GM12878 (cell line): ENCODE measurements at regions of chr3 and their contacts with region 1.

Region 1: DNA sequence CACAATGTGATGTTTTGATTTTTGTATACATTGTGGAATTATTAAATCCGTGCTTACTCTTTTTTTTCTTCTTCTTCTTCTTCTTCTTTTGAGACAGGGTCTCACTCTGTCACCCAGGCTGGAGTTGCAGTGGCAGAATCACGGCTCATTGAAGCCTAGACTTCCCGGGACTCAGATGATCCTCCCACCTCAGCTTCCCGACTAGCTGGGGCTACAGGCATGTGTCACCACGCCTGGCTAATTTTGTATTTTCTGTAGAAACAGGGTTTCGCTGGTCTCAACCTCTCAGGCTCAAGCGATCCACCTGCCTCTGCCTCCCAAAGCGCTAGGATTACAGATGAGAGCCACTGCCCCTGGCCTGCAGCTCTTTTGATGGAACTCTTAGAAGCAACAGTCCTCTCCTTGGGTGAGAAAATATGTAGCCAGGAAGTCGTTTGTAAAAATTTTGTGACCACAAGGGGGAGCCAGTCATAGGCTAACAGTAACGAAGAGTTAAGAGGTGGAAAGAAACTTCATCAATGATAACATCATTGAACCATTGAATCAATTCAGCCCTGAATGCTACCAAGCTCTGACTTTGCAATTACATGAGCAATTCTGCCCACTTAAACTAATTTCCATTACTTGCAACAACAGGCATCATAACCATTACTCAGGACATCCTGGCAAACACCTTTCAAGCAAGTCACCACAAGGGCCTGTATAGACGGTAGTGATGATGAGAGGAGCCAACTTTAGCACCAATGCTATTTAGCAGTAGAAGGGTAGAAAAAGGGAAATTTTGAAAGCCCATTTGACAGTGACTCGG is 16.7 kb upstream of the CMTM7 start:
- DNase-seq: peak; percentile 42
- ATAC-seq: peak; percentile 92
- H3K4me3 ChIP-seq: no peak overlapping the region
- H3K27ac ChIP-seq: no peak overlapping the region
- H3K4me1 ChIP-seq: peaks cover 4% of the 10 kb centered on the region; the same call in 1 of the 2 replicates
- H3K27me3 ChIP-seq: peaks cover 0 to 3% of the 10 kb centered on the region in 2 experiments; a peak in 1 of 4 replicates
- CTCF ChIP-seq: peak; percentile 55 to 60 (median 59); a peak in 5 of 6 replicates
- EP300 ChIP-seq: no peak
- POLR2A ChIP-seq: no peak
- RAD21 ChIP-seq: peak; percentile 75

Region 2: GRCh38 chr3:32401556-32402081 is 26.6 kb after region 1 on chr3:
- CTCF ChIA-PET with region 1: interaction called, 102 read pairs
- POLR2A ChIA-PET with region 1: no interaction called
- RAD21 ChIA-PET with region 1: interaction called, 24 read pairs
- SMC1A ChIA-PET with region 1: interaction called, 78 read pairs
- in situ Hi-C with region 1: no loop called
- intact Hi-C with region 1: loop called (anchors 1 kb)
- DNase-seq: no peak
- ATAC-seq: peak; percentile 83
- H3K4me3 ChIP-seq: peak overlapping the region; percentile 61
- H3K27ac ChIP-seq: no peak overlapping the region
- H3K4me1 ChIP-seq: peaks cover 3% of the 10 kb centered on the region
- H3K27me3 ChIP-seq: peaks cover 0 to 3% of the 10 kb centered on the region in 2 experiments; a peak in 1 of 4 replicates
- CTCF ChIP-seq: no peak
- EP300 ChIP-seq: no peak
- POLR2A ChIP-seq: no peak
- RAD21 ChIP-seq: no peak

Region 3: GRCh38 chr3:32420126-32421038 is 45.4 kb after region 1 on chr3:
- CTCF ChIA-PET with region 1: interaction called, 22 read pairs
- POLR2A ChIA-PET with region 1: no interaction called
- RAD21 ChIA-PET with region 1: interaction called, 14 read pairs
- SMC1A ChIA-PET with region 1: interaction called, 26 read pairs
- in situ Hi-C with region 1: no loop called
- intact Hi-C with region 1: no loop called
- DNase-seq: peak; percentile 56
- ATAC-seq: peak; percentile 91
- H3K4me3 ChIP-seq: no peak overlapping the region
- H3K27ac ChIP-seq: no peak overlapping the region
- H3K4me1 ChIP-seq: peaks cover 35% of the 10 kb centered on the region
- H3K27me3 ChIP-seq: no peaks in the 10 kb centered on the region
- CTCF ChIP-seq: peak in 1 of 3 experiments; percentile 22; a peak in 2 of 6 replicates
- EP300 ChIP-seq: peak; percentile 68 to 89; a peak in 3 of 4 replicates
- POLR2A ChIP-seq: no peak
- RAD21 ChIP-seq: peak; percentile 48

Region 4: GRCh38 chr3:32438596-32439344 is 63.8 kb after region 1 on chr3:
- CTCF ChIA-PET with region 1: interaction called, 5 read pairs
- POLR2A ChIA-PET with region 1: no interaction called
- RAD21 ChIA-PET with region 1: interaction called, 8 read pairs
- SMC1A ChIA-PET with region 1: interaction called, 29 read pairs
- in situ Hi-C with region 1: no loop called
- intact Hi-C with region 1: no loop called
- DNase-seq: peak; percentile 92
- ATAC-seq: peak; percentile 89
- H3K4me3 ChIP-seq: no peak overlapping the region
- H3K27ac ChIP-seq: peak overlapping the region; percentile 38
- H3K4me1 ChIP-seq: peaks cover 56% of the 10 kb centered on the region
- H3K27me3 ChIP-seq: no peaks in the 10 kb centered on the region
- CTCF ChIP-seq: no peak
- EP300 ChIP-seq: peak; percentile 96 to 99
- POLR2A ChIP-seq: no peak
- RAD21 ChIP-seq: no peak

Region 5: GRCh38 chr3:32493437-32494414 is 118.7 kb after region 1 on chr3:
- CTCF ChIA-PET with region 1: interaction called, 20 read pairs
- POLR2A ChIA-PET with region 1: interaction called, 4 read pairs
- RAD21 ChIA-PET with region 1: interaction called, 5 read pairs
- SMC1A ChIA-PET with region 1: interaction called, 11 read pairs
- in situ Hi-C with region 1: no loop called
- intact Hi-C with region 1: no loop called
- DNase-seq: no peak
- ATAC-seq: peak; percentile 77
- H3K4me3 ChIP-seq: 0 out of 2 replicates have a peak overlapping the region, but pooled peaks have one; percentile 13
- H3K27ac ChIP-seq: no peak overlapping the region; the same call in 1 of the 2 replicates
- H3K4me1 ChIP-seq: peaks cover 23% of the 10 kb centered on the region
- H3K27me3 ChIP-seq: no peaks in the 10 kb centered on the region
- CTCF ChIP-seq: no peak
- EP300 ChIP-seq: peak; percentile 74 to 83; a peak in 3 of 4 replicates
- POLR2A ChIP-seq: no peak
- RAD21 ChIP-seq: no peak

Region 6: GRCh38 chr3:32510075-32510724 is 135.2 kb after region 1 on chr3:
- CTCF ChIA-PET with region 1: interaction called, 3 read pairs
- POLR2A ChIA-PET with region 1: no interaction called
- RAD21 ChIA-PET with region 1: no interaction called
- SMC1A ChIA-PET with region 1: interaction called, 10 read pairs
- in situ Hi-C with region 1: no loop called
- intact Hi-C with region 1: no loop called
- DNase-seq: no peak
- ATAC-seq: peak; percentile 97
- H3K4me3 ChIP-seq: no peak overlapping the region
- H3K27ac ChIP-seq: no peak overlapping the region
- H3K4me1 ChIP-seq: no peaks in the 10 kb centered on the region
- H3K27me3 ChIP-seq: no peaks in the 10 kb centered on the region
- CTCF ChIP-seq: peak; percentile 77 to 95 (median 83)
- EP300 ChIP-seq: no peak
- POLR2A ChIP-seq: no peak
- RAD21 ChIP-seq: peak; percentile 100